Activated CD4-positive, alpha-beta T cell treated with anti-CD3 and anti-CD28 coated beads for 36 hours (primary cell): ENCODE measurements at regions of chr3 and their contacts with region 1.

Region 1: GRCh38 chr3:155854141-155854940 is at the start of gene SLC33A1:
- DNase-seq: peak; percentile 99
- ATAC-seq: peak; percentile 94
- H3K4me3 Mint-ChIP-seq: peak within 1 kb of the TSS; percentile 99
- H3K27ac Mint-ChIP-seq: peak within 1 kb of the TSS; percentile 99
- H3K4me1 Mint-ChIP-seq: peaks cover 33% of the 10 kb centered on the region
- H3K27me3 Mint-ChIP-seq: no peaks in the 10 kb centered on the region
- total RNA-seq, gene SLC33A1: 19.2 to 19.9 TPM

Region 2: DNA sequence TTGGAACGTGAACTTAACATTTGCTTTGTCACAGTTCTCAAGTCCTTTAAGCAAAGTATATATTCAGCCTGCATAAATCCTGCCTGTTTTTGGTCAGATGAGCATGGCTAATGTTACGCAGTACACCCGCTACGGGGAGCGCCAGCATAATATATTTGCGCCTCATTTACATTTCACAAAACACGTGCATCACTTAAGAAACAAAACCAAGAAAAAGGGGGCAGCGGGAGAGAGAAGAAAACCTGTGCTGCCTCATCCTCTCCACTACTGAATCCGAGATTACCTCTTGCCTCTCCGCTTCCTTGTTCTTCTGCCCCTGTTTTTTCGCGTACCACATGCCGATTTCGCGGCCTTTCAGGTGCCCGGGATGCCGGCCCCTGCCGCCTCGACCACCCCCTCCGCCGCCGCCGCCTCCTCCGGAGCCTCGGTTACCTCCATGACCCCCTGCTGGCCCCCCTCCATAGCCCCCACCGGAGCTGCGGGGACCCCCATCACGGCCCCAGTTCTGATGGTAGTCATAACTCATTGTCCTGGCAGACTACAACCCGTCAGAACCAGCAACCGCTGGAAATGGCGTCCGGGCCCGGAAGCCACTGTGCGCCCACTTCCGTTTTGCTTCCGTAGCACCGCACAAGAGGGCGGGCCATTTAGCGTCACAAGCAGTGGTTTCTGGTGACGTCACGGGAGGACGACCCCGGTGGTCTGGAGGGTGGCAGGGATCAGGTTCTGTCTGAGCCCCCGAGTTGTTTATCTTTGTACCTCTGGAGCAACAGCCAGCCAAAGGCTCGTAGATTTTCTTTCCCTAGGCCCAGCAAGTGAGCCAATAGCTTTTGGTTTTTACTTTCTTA is 1530.2 kb before region 1 on chr3 and contains the start of gene DHX36:
- CTCF ChIA-PET with region 1: no interaction called
- POLR2A ChIA-PET with region 1: no interaction called
- intact Hi-C with region 1: loop called (anchors 1 kb)
- DNase-seq: peak; percentile 93
- ATAC-seq: peak; percentile 91
- H3K4me3 Mint-ChIP-seq: peak within 1 kb of the TSS; percentile 85
- H3K27ac Mint-ChIP-seq: peak within 1 kb of the TSS; percentile 97
- H3K4me1 Mint-ChIP-seq: peaks cover 25% of the 10 kb centered on the region
- H3K27me3 Mint-ChIP-seq: no peaks in the 10 kb centered on the region
- total RNA-seq, gene DHX36: 56.3 to 74.6 TPM

Region 3: GRCh38 chr3:155744626-155745324 is 109.6 kb before region 1 on chr3 and contains the start of gene PLCH1:
- CTCF ChIA-PET with region 1: no interaction called
- POLR2A ChIA-PET with region 1: no interaction called
- intact Hi-C with region 1: loop called (anchors 5 to 10 kb)
- DNase-seq: peak; percentile 68
- ATAC-seq: peak; percentile 73
- H3K4me3 Mint-ChIP-seq: peak within 1 kb of the TSS; percentile 78
- H3K27ac Mint-ChIP-seq: peak within 1 kb of the TSS; percentile 39
- H3K4me1 Mint-ChIP-seq: peaks cover 13% of the 10 kb centered on the region
- H3K27me3 Mint-ChIP-seq: peaks cover 40% of the 10 kb centered on the region
- total RNA-seq, gene PLCH1: 0.16 to 0.26 TPM

Region 4: GRCh38 chr3:155805802-155806618 is 48.3 kb before region 1 on chr3 and contains the start of gene C3orf33:
- CTCF ChIA-PET with region 1: interaction called, 14 read pairs
- POLR2A ChIA-PET with region 1: interaction called, 10 read pairs
- intact Hi-C with region 1: loop called (anchors 1 to 2 kb)
- DNase-seq: peak; percentile 87
- ATAC-seq: peak; percentile 98
- H3K4me3 Mint-ChIP-seq: peak within 1 kb of the TSS; percentile 81
- H3K27ac Mint-ChIP-seq: peak within 1 kb of the TSS; percentile 84
- H3K4me1 Mint-ChIP-seq: peaks cover 10% of the 10 kb centered on the region
- H3K27me3 Mint-ChIP-seq: peaks cover 9% of the 10 kb centered on the region
- total RNA-seq, gene C3orf33: 1.5 to 1.6 TPM

Region 5: GRCh38 chr3:155912579-155913190 is 58.3 kb after region 1 on chr3:
- CTCF ChIA-PET with region 1: no interaction called
- POLR2A ChIA-PET with region 1: no interaction called
- intact Hi-C with region 1: no loop called
- DNase-seq: no peak
- ATAC-seq: no peak
- H3K4me3 Mint-ChIP-seq: no peak overlapping the region
- H3K27ac Mint-ChIP-seq: no peak overlapping the region
- H3K4me1 Mint-ChIP-seq: peaks cover 6% of the 10 kb centered on the region
- H3K27me3 Mint-ChIP-seq: no peaks in the 10 kb centered on the region

Region 6: DNA sequence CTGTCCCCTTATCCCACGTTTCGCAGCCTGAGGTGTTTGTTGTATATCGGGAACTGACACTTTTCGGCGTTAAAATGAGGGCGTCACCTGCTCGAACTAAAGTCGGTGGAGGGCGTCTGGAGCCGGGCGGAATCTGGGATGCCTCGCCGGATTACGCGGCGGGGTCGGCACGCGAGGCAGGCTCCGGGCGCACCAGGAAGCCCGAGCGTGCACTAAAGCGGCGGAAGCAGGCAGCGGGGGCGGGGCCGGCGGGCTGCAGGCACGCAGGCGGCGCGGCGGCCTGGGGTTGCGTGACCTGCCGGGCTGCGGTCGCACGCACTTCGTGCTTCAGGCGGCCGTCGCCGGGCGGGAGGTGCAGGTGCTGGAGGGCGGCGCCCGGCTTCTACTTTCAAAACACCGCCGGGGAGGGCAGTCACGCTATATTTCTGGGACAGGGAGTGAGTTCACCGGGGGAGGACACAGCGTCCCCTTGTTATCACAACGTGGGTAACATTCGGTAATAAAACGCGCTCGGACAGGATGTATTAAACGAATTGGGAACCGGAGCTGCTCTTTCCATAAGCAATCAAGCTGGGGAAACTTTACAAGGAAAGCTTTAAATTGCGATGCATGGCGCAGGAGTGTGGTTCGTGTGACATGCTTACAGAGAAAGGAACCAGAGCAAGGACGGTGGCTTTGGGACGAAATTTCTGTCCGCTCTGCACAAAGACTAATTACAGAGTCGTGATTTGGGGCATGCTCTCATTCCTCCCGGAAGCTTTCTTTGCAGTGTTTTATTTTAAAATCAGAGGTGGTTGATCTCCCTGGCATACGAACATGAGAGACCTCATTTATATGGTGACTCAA is 962.7 kb after region 1 on chr3:
- CTCF ChIA-PET with region 1: no interaction called
- POLR2A ChIA-PET with region 1: no interaction called
- intact Hi-C with region 1: loop called in 1 of 2 experiments (anchors 5 kb)
- DNase-seq: peak; percentile 92
- ATAC-seq: peak; percentile 83
- H3K4me3 Mint-ChIP-seq: peak overlapping the region; percentile 79
- H3K27ac Mint-ChIP-seq: peak overlapping the region; percentile 92
- H3K4me1 Mint-ChIP-seq: peaks cover 36% of the 10 kb centered on the region
- H3K27me3 Mint-ChIP-seq: no peaks in the 10 kb centered on the region

Region 7: DNA sequence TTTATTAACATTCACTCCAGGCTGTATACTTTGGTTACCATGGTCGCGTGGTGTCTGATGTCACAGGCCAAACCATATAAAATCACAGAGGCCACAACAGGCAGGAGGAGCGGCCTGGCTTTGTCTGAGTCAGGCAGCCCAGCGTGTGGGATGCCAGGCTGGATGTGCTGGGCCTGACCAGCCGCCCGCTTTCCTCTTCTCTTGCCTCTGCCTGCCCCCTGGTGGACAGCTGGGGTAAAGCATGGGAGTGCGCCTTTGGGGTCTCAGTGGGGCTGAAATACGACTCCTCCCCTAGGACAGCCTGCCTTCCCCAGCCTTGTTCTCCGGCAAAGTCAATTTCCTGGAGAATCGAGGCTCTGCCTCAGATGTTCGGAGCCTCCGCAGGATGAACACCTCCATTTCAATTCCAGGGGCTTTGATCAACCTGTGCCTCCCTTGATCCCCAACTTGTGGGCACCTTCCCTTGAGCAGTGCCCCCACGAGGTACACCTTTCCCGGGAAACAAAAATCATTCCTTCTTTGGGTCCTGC is 1227.4 kb after region 1 on chr3:
- CTCF ChIA-PET with region 1: no interaction called
- POLR2A ChIA-PET with region 1: no interaction called
- intact Hi-C with region 1: loop called in 1 of 2 experiments (anchors 10 kb)
- DNase-seq: peak; percentile 90
- ATAC-seq: peak; percentile 91
- H3K4me3 Mint-ChIP-seq: no peak overlapping the region
- H3K27ac Mint-ChIP-seq: peak overlapping the region; percentile 66
- H3K4me1 Mint-ChIP-seq: peaks cover 32% of the 10 kb centered on the region
- H3K27me3 Mint-ChIP-seq: no peaks in the 10 kb centered on the region